Activated CD4-positive, alpha-beta T cell treated with anti-CD3 and anti-CD28 coated beads for 36 hours (primary cell): ENCODE measurements at regions of chr1 and their contacts with region 1.

Region 1: DNA sequence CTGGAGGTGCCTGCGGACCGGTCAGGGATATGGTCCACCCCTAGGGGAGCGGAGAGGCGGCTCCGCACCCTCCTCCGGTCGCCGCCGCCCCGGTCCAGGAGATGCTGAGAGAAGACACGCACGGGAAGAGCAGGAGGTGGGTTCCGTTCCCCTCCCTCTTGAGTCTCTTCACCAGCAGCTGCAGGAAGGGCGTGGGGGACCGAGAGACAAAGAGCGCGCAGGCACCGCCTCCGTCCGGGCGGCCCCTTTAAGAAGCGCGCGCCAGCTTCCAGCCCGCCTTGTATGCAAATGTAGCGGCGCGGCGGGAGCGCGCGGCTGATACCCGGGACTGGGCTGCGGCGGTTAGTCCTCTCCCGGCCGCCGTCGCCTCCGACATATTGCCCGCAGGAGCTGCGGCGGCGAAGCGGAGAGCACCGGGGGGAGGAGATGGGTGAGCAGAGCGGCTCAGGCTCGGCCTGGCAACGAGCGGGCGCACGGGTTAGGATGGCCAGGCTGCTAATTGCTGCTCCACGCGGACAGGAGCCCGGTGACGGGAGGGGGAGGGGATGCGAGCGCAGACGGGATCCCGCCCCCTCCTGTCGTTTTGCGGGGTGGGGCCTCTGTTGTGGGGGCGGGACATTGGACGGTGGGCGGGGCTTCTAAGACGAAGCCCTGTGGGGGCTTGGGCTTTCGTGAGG is at the start of gene TMEM39B:
- DNase-seq: peak; percentile 97
- ATAC-seq: peak; percentile 83
- H3K4me3 Mint-ChIP-seq: peak within 1 kb of the TSS; percentile 90
- H3K27ac Mint-ChIP-seq: peak within 1 kb of the TSS; percentile 98
- H3K4me1 Mint-ChIP-seq: peaks cover 37% of the 10 kb centered on the region
- H3K27me3 Mint-ChIP-seq: no peaks in the 10 kb centered on the region
- total RNA-seq, gene TMEM39B: 25.2 to 29.8 TPM

Region 2: GRCh38 chr1:30718636-30719405 is 1353.9 kb before region 1 on chr1:
- CTCF ChIA-PET with region 1: no interaction called
- POLR2A ChIA-PET with region 1: no interaction called
- intact Hi-C with region 1: loop called in 1 of 2 experiments (anchors 2 kb)
- DNase-seq: peak; percentile 91
- ATAC-seq: peak; percentile 66
- H3K4me3 Mint-ChIP-seq: peak overlapping the region; percentile 84
- H3K27ac Mint-ChIP-seq: peak overlapping the region; percentile 94
- H3K4me1 Mint-ChIP-seq: peaks cover 19% of the 10 kb centered on the region
- H3K27me3 Mint-ChIP-seq: no peaks in the 10 kb centered on the region

Region 3: DNA sequence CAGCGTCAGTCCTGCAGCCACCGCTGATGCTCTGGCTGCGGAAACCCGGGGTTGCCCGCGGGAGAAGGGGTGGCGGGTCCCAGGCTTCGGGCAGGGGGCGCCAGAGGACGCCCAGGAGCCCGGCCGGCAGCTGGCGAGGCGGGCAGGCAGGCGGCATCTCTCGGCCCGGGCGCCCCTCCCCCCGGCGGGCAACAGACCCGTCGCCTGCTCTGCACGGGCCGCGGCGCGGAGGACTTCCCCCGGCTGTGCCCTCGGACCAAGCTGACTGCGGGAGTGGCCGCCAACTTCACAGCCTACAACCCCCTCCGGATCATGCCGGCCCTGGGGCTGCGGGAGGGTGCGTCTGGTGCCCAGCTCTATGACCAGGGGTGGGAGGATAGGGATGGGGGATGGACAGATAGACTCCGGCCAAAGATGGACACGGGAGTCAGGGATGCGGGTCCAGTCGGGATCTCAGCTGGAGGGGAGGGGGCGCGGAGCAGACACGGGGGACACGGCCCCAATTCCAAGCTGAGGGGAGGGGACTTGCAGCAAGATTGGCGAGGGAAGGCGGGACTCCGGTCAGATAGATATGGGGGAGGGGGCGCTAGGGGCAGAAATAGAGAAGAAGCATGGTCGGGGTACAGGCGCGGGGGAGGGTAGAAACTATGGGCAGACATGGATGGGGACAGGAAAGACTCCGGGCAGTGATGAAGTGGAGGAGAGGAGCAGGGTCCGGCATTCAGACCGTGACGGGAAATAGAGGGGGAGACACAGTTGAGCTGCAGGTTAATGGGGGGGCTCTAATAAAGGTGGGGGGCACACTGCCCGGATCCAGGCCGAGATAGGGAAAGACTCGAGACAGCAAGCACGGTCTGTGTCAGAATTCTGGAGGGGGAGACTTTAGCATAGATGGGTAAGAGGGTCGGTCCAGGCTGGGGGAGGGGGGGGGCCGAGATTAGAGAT is 309.8 kb before region 1 on chr1:
- CTCF ChIA-PET with region 1: no interaction called
- POLR2A ChIA-PET with region 1: interaction called, 3 read pairs
- intact Hi-C with region 1: loop called in 1 of 2 experiments (anchors 2 kb)
- DNase-seq: peak; percentile 87
- ATAC-seq: peak; percentile 65
- H3K4me3 Mint-ChIP-seq: peak overlapping the region; percentile 65
- H3K27ac Mint-ChIP-seq: no peak overlapping the region
- H3K4me1 Mint-ChIP-seq: peaks cover 26% of the 10 kb centered on the region
- H3K27me3 Mint-ChIP-seq: peaks cover 15% of the 10 kb centered on the region

Region 4: GRCh38 chr1:32013386-32014198 is 59.2 kb before region 1 on chr1 and contains the start of gene KHDRBS1:
- CTCF ChIA-PET with region 1: interaction called, 3 read pairs
- POLR2A ChIA-PET with region 1: interaction called, 3 read pairs
- intact Hi-C with region 1: loop called (anchors 1 kb)
- DNase-seq: peak; percentile 99
- ATAC-seq: peak; percentile 90
- H3K4me3 Mint-ChIP-seq: peak within 1 kb of the TSS; percentile 97
- H3K27ac Mint-ChIP-seq: peak within 1 kb of the TSS; percentile 95
- H3K4me1 Mint-ChIP-seq: peaks cover 27% of the 10 kb centered on the region
- H3K27me3 Mint-ChIP-seq: no peaks in the 10 kb centered on the region
- total RNA-seq, gene KHDRBS1: 198 to 206 TPM

Region 5: GRCh38 chr1:32200226-32201010 is 127.7 kb after region 1 on chr1 and contains the start of gene CCDC28B:
- CTCF ChIA-PET with region 1: no interaction called
- POLR2A ChIA-PET with region 1: interaction called, 7 read pairs
- intact Hi-C with region 1: loop called in 1 of 2 experiments (anchors 2 kb)
- DNase-seq: peak; percentile 77
- ATAC-seq: peak; percentile 53
- H3K4me3 Mint-ChIP-seq: peak within 1 kb of the TSS; percentile 71
- H3K27ac Mint-ChIP-seq: peak within 1 kb of the TSS; percentile 86
- H3K4me1 Mint-ChIP-seq: peaks cover 57% of the 10 kb centered on the region
- H3K27me3 Mint-ChIP-seq: no peaks in the 10 kb centered on the region
- total RNA-seq, gene CCDC28B: 13.0 to 19.3 TPM

Region 6: GRCh38 chr1:32351399-32352238 is 278.9 kb after region 1 on chr1:
- CTCF ChIA-PET with region 1: no interaction called
- POLR2A ChIA-PET with region 1: no interaction called
- intact Hi-C with region 1: loop called in 1 of 2 experiments (anchors 1 kb)
- DNase-seq: peak; percentile 96
- ATAC-seq: peak; percentile 96
- H3K4me3 Mint-ChIP-seq: peak overlapping the region; percentile 73
- H3K27ac Mint-ChIP-seq: peak overlapping the region; percentile 82
- H3K4me1 Mint-ChIP-seq: peaks cover 20% of the 10 kb centered on the region
- H3K27me3 Mint-ChIP-seq: no peaks in the 10 kb centered on the region

Region 7: GRCh38 chr1:32876341-32877210 is 803.8 kb after region 1 on chr1:
- CTCF ChIA-PET with region 1: no interaction called
- POLR2A ChIA-PET with region 1: no interaction called
- intact Hi-C with region 1: no loop called
- DNase-seq: peak; percentile 86
- ATAC-seq: peak; percentile 89
- H3K4me3 Mint-ChIP-seq: no peak overlapping the region
- H3K27ac Mint-ChIP-seq: no peak overlapping the region
- H3K4me1 Mint-ChIP-seq: no peaks in the 10 kb centered on the region
- H3K27me3 Mint-ChIP-seq: peaks cover 34% of the 10 kb centered on the region